Naive thymus-derived CD4-positive, alpha-beta T cell (primary cell): ENCODE measurements at regions of chr17 and their contacts with region 1.

Region 1: DNA sequence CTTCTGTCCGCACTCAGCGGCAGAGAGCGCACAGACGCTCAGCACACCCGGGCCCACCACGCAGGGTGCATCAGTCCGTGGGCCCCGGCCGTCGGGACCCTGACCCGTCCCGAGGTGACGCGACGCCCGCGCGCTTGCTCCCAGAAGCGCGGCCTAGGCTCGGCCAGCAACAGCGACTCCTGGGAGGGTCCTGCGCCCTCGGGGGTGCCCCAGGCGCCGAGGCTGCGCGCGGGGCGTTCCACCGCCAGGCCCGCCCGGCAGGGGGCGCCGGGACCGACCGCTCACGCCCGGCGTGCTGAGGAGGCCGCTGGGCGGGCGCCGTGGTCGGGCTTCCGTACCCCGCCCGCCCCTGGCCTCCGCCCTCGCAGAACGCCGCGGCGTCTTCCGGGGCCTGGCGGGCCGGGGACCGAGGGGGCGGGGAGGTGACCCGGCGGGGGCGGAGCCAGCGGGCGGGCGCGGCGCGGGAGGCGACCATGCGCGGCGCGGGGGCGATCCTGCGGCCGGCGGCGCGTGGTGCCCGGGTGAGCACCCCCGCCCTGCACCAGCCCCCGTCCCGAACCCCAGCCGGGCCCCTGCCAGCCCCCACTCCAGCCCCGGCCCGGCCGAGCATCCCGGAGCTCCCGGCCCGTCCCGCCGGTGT is at the start of gene CISD3:
- DNase-seq: peak; percentile 73 to 91 (median 84)
- ATAC-seq: peak; percentile 92
- H3K4me3 ChIP-seq: peak within 1 kb of the TSS; percentile 78
- H3K4me3 Mint-ChIP-seq: peak within 1 kb of the TSS; percentile 87 to 99 (median 95)
- H3K27ac ChIP-seq: peak within 1 kb of the TSS; percentile 81
- H3K27ac Mint-ChIP-seq: peak within 1 kb of the TSS; percentile 89 to 97 (median 93)
- H3K4me1 ChIP-seq: peaks cover 44 to 56% of the 10 kb centered on the region in 2 donors
- H3K4me1 Mint-ChIP-seq: peaks cover 40 to 91% (median 79%) of the 10 kb centered on the region in 7 donors
- H3K27me3 ChIP-seq: no peaks in the 10 kb centered on the region
- H3K27me3 Mint-ChIP-seq: peaks cover 0 to 2% (median 0%) of the 10 kb centered on the region in 5 donors
- total RNA-seq, gene CISD3: 8.0 to 39.6 (median 12.9) TPM

Region 2: DNA sequence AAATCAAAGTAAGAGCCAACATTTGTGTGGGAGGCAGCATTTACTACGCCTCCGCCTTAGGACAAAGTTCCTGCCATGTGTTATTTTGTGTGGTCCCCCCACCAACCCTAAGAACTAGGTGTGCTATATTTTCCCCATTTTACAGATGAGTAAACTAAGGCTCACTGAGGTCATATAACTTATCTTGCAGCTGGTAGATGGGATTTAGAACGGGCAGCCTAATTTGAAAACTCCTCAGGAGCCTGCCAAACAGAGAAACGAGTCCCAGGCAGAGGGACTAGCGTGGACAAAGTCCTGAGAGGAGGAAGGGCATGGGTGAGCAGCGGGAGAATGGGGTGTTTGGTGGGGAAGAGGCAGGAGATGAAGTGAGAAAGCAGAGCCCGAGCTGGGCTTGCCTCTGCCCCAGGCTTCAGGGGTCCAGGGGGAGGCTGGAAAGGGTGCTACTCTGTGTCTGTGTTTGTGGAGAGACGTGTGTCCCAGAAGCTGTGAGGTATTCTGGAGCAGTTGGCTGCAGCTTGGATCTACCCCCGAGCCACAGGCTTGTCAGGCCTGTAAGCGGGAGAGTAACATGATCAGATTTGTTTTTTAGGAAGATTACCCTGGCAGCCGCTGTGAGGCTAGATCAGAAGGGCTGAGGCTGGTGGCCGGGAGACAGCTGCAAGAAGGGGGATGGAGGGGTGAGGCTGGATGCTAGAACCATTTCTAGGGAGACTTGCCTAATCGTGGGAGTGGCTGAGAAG is 20.0 kb before region 1 on chr17:
- CTCF ChIA-PET with region 1: interaction called, 14 read pairs
- POLR2A ChIA-PET with region 1: interaction called, 317 read pairs
- intact Hi-C with region 1: loop called (anchors 1 kb)
- DNase-seq: no peak
- ATAC-seq: no peak
- H3K4me3 ChIP-seq: no peak overlapping the region
- H3K4me3 Mint-ChIP-seq: no peak overlapping the region
- H3K27ac ChIP-seq: peak overlapping the region; percentile 18
- H3K27ac Mint-ChIP-seq: peak overlapping the region; percentile 36 to 85 (median 69)
- H3K4me1 ChIP-seq: peaks cover 15 to 22% of the 10 kb centered on the region in 2 donors
- H3K4me1 Mint-ChIP-seq: peaks cover 41 to 57% (median 49%) of the 10 kb centered on the region in 7 donors
- H3K27me3 ChIP-seq: no peaks in the 10 kb centered on the region
- H3K27me3 Mint-ChIP-seq: no peaks in the 10 kb centered on the region